Right ventricle myocardium superior (tissue), 1 donor: ENCODE measurements at regions of chr2 and their contacts with region 1.

Region 1: DNA sequence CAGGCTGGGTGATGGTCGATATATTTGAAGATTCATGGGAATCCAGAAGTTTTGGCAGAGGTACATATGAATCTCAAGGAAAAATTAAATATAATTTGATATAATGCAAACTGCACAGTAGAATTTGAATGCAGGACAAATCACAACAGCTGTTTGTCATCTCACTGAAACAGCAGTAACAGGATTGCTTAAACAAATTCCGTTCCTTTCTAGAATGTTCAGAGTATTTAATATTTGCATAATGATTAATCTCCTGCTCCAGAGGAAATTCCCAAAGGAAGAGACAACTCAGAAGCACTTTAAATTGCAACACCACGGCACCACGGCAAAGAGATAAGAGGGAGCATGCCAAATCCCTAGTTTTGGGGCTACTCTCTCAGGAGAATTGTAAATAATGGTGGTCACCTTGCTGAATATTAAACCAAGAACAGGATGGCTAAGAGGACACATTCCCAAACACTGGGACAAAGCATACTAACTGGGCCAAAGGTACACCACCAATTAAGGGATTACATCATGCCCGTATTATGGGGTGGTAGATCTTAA is 67.8 kb upstream of the MAP4K3 start:
- DNase-seq: no peak
- ATAC-seq: peak; percentile 50

Region 2: DNA sequence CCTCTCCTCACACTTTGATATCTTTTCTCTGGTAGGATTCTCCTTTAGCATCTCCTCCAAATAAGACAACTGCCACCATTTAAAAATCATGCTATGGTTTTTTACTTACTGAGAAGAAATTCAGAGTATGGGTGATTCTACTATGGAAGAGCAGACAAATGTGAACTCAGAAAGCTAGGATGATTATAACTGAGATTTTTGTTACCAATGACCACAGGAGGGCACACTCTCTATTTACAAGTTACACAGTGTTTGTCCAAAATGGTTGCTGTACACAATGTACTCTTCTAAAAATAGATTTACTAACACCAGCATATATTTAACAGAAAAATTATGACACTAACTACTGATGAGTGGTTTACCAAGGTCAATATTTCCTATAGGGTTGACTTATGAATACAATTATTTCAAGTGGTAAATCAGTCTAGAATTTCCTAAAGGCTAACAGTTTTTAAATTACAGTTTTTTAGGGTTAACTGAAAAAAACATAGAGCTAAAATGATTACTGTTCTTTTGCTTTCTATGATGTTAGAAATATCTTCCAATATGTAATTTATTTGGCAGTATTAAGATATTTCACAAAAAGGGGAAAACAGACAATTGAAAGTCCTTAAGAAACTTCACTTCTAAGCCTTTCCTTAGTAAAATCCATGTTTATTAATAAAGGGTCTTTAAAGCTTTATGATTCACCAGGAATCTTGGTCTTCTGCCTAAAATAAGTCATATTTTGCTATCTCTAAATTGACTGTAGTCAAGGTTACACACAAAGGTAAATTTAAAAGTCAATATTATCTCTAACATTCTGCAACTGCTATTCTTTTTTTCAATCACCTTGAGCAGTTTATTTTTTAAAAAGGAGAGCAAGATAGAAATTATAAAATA is 125.0 kb before region 1 on chr2:
- intact Hi-C with region 1: loop called (anchors 10 kb)
- DNase-seq: no peak
- ATAC-seq: peak; percentile 88